ENCODE measurements at regions of chr2 and their contacts with region 1.

Region 1: DNA sequence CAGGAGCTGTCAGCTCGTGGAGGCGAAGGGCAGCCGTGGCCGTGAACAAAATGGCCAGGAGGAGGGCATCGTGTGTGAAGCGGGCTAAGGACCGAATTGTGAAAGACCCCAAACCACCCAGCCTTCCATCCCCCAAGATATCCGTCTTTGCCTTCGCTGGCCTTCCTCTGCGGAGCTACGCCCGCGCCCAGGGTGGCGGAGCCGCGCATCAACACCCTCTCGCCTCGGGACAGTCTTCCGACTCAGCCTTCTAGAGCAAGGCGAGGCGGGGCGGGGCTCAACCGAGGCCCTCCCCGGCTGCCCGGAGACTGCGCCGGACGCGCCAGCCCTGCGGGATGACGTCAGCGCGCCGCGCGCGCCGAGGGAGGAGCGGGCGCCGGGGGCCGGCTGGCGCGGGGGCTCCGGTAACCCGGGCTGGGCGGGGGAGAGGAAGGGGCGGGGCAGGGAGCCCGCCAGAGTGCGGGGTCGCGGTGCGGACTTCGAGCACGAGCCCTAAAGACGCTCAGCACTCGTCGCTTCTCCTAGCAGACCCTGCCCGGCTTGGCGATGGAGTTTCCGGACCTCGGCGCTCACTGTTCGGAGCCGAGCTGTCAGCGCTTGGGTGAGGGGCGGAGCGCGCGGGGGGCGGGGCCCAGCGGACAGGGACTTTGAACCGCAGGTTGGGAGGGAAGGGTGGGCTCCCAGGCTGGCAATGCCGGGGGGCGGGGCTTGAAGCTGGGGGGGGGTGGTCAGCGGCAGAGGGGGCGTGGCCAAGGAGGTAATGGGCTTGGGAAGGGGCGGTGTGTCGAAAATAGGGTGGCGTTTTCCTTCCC is at the start of gene ZFAND2B:
- DNase-seq: peak; percentile 86
- ATAC-seq: peak; percentile 83
- H3K4me3 ChIP-seq: peak within 1 kb of the TSS; percentile 65 to 86 (median 74)
- H3K27ac ChIP-seq: peak within 1 kb of the TSS; percentile 95
- H3K4me1 ChIP-seq: peaks cover 54% of the 10 kb centered on the region
- H3K27me3 ChIP-seq: no peaks in the 10 kb centered on the region; a peak in 1 of 5 replicates
- CTCF ChIP-seq: no peak; the same call in 1 of the 2 replicates
- EP300 ChIP-seq: peak in 1 of 2 experiments; percentile 4; a peak in 1 of 4 replicates
- POLR2A ChIP-seq: peak in 1 of 2 experiments; percentile 97; a peak in 2 of 4 replicates
- RAD21 ChIP-seq: no peak; the same call in none of the 2 replicates
- total RNA-seq, gene ZFAND2B: 39.4 and 53.3 TPM in 2 replicates

Region 2: DNA sequence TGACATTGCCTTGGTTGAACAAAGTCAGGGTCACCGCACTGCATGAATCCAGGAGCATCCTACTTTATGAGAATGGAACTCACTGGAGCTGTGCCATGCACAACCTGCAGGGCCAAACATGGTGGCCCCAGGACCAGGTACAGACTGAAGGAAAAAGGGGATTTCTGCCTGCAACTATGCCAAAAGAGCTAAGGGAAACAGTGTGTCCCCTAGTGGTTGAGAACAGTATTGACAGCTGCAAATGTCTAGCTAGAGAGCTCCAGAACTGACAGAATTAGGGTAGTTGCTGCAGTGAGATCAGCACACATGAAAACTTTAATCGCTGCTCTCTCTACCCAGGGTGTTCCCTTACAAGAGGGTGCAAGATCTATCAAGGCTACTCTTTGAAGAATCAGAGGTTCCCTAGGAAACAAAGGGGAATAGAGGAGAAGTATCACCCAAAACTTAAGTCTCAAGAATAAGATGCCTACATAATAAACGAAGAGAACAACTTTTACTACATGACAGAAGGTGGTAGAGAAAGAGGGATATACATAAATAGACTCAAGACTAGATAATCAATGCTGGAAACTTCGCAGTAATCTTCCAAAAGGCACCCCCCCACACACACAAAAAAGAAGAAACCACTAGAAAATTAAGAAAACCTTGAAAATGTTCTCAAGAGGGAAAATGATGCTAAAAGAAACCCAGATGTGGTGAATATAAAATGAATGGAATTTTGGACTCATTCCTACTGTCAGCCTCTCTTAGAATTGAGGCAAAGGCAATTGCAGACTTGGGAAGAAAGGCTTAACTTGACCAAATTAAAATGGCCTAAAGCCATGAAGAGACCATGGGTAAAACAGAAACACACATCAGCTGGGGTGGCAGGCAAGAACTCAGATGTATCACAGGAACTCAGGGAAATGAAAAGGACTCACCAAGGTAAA is 102.3 kb before region 1 on chr2:
- CTCF ChIA-PET with region 1: no interaction called
- POLR2A ChIA-PET with region 1: no interaction called
- in situ Hi-C with region 1: no loop called
- intact Hi-C with region 1: no loop called
- DNase-seq: peak; percentile 66
- ATAC-seq: peak; percentile 97
- H3K4me3 ChIP-seq: no peak overlapping the region
- H3K27ac ChIP-seq: no peak overlapping the region
- H3K4me1 ChIP-seq: peaks cover 38% of the 10 kb centered on the region
- H3K27me3 ChIP-seq: no peaks in the 10 kb centered on the region
- CTCF ChIP-seq: peak; percentile 84
- EP300 ChIP-seq: no peak
- POLR2A ChIP-seq: no peak
- RAD21 ChIP-seq: peak; percentile 78

Region 3: GRCh38 chr2:219160186-219161017 is 46.2 kb before region 1 on chr2 and contains the start of gene NHEJ1:
- CTCF ChIA-PET with region 1: interaction called, 28 read pairs
- POLR2A ChIA-PET with region 1: interaction called, 14 read pairs
- in situ Hi-C with region 1: no loop called
- intact Hi-C with region 1: loop called (anchors 1 kb)
- DNase-seq: peak; percentile 90
- ATAC-seq: peak; percentile 91
- H3K4me3 ChIP-seq: peak within 1 kb of the TSS; percentile 76 to 94 (median 86)
- H3K27ac ChIP-seq: peak within 1 kb of the TSS; percentile 93
- H3K4me1 ChIP-seq: peaks cover 18% of the 10 kb centered on the region
- H3K27me3 ChIP-seq: no peaks in the 10 kb centered on the region
- CTCF ChIP-seq: peak; percentile 96
- EP300 ChIP-seq: no peak
- POLR2A ChIP-seq: peak; percentile 68 to 93
- RAD21 ChIP-seq: peak; percentile 97
- total RNA-seq, gene NHEJ1: 30.7 and 42.1 TPM in 2 replicates

Region 4: GRCh38 chr2:219186754-219187456 is 19.7 kb before region 1 on chr2:
- CTCF ChIA-PET with region 1: no interaction called
- POLR2A ChIA-PET with region 1: interaction called, 102 read pairs
- in situ Hi-C with region 1: no loop called
- intact Hi-C with region 1: loop called (anchors 1 kb)
- DNase-seq: no peak
- ATAC-seq: peak; percentile 24; the same call in 1 of the 3 replicates
- H3K4me3 ChIP-seq: no peak overlapping the region
- H3K27ac ChIP-seq: no peak overlapping the region
- H3K4me1 ChIP-seq: peaks cover 3% of the 10 kb centered on the region; the same call in 1 of the 2 replicates
- H3K27me3 ChIP-seq: no peaks in the 10 kb centered on the region
- CTCF ChIP-seq: no peak
- EP300 ChIP-seq: no peak
- POLR2A ChIP-seq: no peak
- RAD21 ChIP-seq: no peak

Region 5: GRCh38 chr2:219229305-219230058 is 22.8 kb after region 1 on chr2 and contains the starts of genes ANKZF1 and ATG9A:
- CTCF ChIA-PET with region 1: no interaction called
- POLR2A ChIA-PET with region 1: interaction called, 19 read pairs
- in situ Hi-C with region 1: no loop called
- intact Hi-C with region 1: loop called (anchors 1 kb)
- DNase-seq: peak; percentile 99
- ATAC-seq: peak; percentile 94
- H3K4me3 ChIP-seq: peak within 1 kb of the TSS; percentile 91 to 93 (median 93)
- H3K27ac ChIP-seq: peak within 1 kb of the TSS; percentile 81
- H3K4me1 ChIP-seq: peaks cover 39% of the 10 kb centered on the region
- H3K27me3 ChIP-seq: no peaks in the 10 kb centered on the region; a peak in 1 of 5 replicates
- CTCF ChIP-seq: peak; percentile 9; the same call in 1 of the 2 replicates
- EP300 ChIP-seq: peak; percentile 20 to 21; a peak in 3 of 4 replicates
- POLR2A ChIP-seq: peak; percentile 85 to 92
- RAD21 ChIP-seq: peak; percentile 73
- total RNA-seq, gene ANKZF1: 14.6 and 25.3 TPM in 2 replicates
- total RNA-seq, gene ATG9A: 22.2 and 35.0 TPM in 2 replicates

Region 6: GRCh38 chr2:219388127-219388844 is 181.6 kb after region 1 on chr2:
- CTCF ChIA-PET with region 1: no interaction called
- POLR2A ChIA-PET with region 1: interaction called, 13 read pairs
- in situ Hi-C with region 1: no loop called
- intact Hi-C with region 1: no loop called
- DNase-seq: peak; percentile 87
- ATAC-seq: peak; percentile 74
- H3K4me3 ChIP-seq: peak overlapping the region; percentile 53 to 70 (median 68)
- H3K27ac ChIP-seq: peak overlapping the region; percentile 68
- H3K4me1 ChIP-seq: peaks cover 30% of the 10 kb centered on the region
- H3K27me3 ChIP-seq: no peaks in the 10 kb centered on the region; a peak in 1 of 5 replicates
- CTCF ChIP-seq: peak; percentile 78
- EP300 ChIP-seq: peak in 1 of 2 experiments; percentile 12; a peak in 1 of 4 replicates
- POLR2A ChIP-seq: peak; percentile 52 to 68; a peak in 3 of 4 replicates
- RAD21 ChIP-seq: peak; percentile 67; the same call in 1 of the 2 replicates

Region 7: DNA sequence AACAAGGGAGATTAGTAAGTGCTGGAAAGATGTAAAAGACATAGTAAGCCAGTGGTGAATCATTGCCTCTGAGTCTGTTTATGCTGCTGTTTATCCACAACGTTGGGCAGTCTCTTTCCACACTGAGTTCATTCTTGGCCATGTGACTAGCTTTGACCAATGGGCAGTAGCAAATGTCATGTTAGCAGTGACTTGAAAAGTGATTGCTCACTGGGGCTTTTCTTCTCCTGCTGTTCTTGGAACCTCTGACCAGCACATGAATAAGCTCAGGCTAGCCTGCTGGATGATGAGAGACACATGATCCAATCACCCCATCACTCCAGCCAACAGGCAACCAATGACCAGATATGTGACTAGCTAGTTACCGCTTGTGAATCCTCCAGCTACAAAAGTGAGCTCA is 781.2 kb after region 1 on chr2:
- CTCF ChIA-PET with region 1: no interaction called
- POLR2A ChIA-PET with region 1: no interaction called
- in situ Hi-C with region 1: no loop called
- intact Hi-C with region 1: no loop called
- DNase-seq: no peak
- ATAC-seq: no peak
- H3K4me3 ChIP-seq: no peak overlapping the region
- H3K27ac ChIP-seq: no peak overlapping the region
- H3K4me1 ChIP-seq: no peaks in the 10 kb centered on the region
- H3K27me3 ChIP-seq: peaks cover 0 to 20% of the 10 kb centered on the region in 2 experiments; a peak in 2 of 5 replicates
- CTCF ChIP-seq: no peak
- EP300 ChIP-seq: no peak
- POLR2A ChIP-seq: no peak
- RAD21 ChIP-seq: no peak

Measured in HepG2 (cell line).